Calu3 (cell line): ENCODE measurements at regions of chr22 and their contacts with region 1.

Region 1: DNA sequence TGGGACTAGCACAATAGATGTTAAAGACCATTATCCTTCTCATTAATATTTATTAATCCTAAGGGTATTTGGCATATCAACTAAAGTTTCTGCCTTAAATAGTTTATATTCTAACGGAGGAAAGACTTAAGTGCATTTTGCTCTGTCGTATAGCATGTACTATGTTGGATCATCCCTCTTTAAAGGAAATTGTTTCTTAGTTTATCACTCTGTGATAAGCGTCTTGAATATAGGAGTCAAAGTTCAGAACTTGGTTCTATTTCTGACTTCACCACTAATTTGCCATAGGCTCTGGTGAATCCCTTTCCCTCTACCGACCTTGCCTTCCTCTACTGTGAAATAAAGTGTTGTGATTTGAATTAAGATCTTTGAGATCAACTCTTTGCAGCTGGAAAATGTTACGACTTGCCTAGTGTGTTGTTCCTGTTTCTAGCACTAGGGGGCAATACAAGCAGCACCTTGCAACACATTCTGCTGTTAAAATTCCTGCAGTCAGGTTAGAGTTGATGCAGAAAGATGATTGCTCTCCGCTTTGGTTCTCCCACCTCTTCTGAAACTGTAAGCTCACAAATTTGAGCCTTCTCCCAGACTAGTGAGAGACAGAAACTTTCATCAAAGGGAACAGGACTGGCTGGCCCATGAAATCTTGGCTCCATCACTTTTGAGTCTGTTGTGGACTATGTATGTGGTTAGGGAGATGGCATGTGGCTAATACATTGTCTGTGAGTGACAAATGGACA is 27.8 kb upstream of the ZNRF3 start:
- DNase-seq: peak; percentile 71
- H3K4me3 Mint-ChIP-seq: no peak overlapping the region
- H3K27ac Mint-ChIP-seq: no peak overlapping the region
- H3K4me1 Mint-ChIP-seq: peaks cover 10% of the 10 kb centered on the region
- H3K27me3 Mint-ChIP-seq: no peaks in the 10 kb centered on the region
- CTCF ChIP-seq: peak; percentile 84

Region 2: GRCh38 chr22:28728621-28729313 is 126.8 kb before region 1 on chr22:
- CTCF ChIA-PET with region 1: no interaction called
- intact Hi-C with region 1: no loop called
- DNase-seq: no peak
- H3K4me3 Mint-ChIP-seq: no peak overlapping the region
- H3K27ac Mint-ChIP-seq: no peak overlapping the region
- H3K4me1 Mint-ChIP-seq: no peaks in the 10 kb centered on the region
- H3K27me3 Mint-ChIP-seq: no peaks in the 10 kb centered on the region
- CTCF ChIP-seq: no peak

Region 3: GRCh38 chr22:28894334-28894733 is 38.8 kb after region 1 on chr22:
- CTCF ChIA-PET with region 1: no interaction called
- intact Hi-C with region 1: no loop called
- DNase-seq: no peak
- H3K4me3 Mint-ChIP-seq: no peak overlapping the region
- H3K27ac Mint-ChIP-seq: no peak overlapping the region
- H3K4me1 Mint-ChIP-seq: peaks cover 41% of the 10 kb centered on the region
- H3K27me3 Mint-ChIP-seq: no peaks in the 10 kb centered on the region
- CTCF ChIP-seq: no peak

Region 4: DNA sequence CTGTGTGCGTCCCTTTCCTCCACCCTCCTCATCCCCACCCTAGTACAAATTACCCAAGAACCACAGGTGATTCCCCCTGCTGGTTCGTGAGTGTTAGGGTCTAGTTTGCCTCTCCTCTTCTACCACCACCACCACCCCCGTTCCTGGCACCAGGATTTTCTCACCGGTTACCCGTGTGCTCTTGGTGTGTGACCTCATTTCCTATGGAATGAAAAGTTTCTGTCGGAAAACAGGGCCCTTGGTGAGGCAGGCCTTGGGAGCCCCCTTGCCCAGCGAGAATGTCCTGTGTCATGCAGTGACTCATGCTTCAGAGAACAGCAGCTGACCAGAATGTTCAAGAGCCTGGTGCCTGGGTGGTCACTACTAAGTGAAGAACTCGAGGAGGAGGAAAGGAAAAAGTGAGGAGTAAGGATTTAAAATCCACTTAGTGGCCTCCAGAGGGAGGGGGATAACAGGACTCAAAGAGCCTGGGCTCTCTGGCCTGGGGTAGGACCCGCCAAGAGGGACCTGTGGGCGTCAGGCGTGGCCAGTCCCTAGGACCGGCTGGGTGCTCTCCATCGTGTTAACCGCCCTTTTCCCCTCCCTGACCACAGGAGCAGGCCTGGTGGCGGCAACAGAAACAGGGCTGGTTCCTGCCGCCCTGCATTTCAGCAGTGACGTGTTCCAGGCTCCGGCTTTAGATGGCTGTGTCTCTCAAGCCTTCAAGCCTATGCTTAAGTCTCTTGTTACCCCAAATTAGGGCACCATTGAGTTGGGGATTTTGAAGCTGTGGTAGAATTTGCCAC is 175.9 kb after region 1 on chr22:
- CTCF ChIA-PET with region 1: interaction called, 11 read pairs
- intact Hi-C with region 1: no loop called
- DNase-seq: peak; percentile 84
- H3K4me3 Mint-ChIP-seq: peak overlapping the region; percentile 92
- H3K27ac Mint-ChIP-seq: peak overlapping the region; percentile 99
- H3K4me1 Mint-ChIP-seq: peaks cover 60% of the 10 kb centered on the region
- H3K27me3 Mint-ChIP-seq: no peaks in the 10 kb centered on the region
- CTCF ChIP-seq: peak; percentile 18

Region 5: DNA sequence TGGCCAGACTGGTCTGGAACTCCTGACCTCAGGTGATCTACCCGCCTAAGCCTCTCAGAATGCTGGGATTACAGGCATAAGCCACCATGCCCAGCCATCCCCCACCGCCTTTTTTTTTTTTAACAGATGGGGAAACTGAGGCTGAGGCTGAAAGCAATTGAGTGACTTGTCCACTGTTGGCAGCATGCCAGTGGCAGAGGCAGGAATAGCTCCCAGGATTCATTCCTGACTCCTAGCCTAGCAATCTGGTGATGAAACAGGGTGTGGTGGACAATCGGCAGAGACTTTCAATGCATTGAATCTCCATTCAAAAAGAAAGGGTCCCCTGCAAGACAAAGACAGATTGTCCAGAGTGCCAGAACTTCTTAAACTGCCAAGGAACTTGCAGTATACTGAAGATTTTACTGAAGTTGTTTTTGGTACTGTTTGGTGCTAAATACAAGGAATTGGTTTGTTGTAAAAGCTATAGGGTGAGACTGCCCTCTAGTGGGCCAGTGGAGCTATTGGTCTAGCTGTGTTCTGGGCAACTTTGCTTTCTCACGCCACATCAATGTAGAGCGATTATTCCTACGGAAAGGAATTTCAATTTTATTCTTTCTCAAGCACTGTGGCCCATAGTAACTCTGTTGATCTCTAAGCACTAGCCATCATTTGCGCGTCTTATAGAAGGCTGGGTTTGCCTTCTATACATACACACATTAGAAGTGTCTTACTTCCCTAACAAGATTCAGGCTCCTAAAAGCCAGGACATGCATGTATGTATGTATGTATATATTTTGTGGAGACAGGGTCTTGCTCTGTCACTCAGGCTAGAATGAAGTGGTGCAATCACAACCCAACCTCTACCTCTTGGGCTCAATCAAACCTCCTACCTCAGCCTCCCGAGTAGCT is 185.1 kb after region 1 on chr22:
- CTCF ChIA-PET with region 1: interaction called, 42 read pairs
- intact Hi-C with region 1: loop called (anchors 1 kb)
- DNase-seq: peak; percentile 72
- H3K4me3 Mint-ChIP-seq: no peak overlapping the region
- H3K27ac Mint-ChIP-seq: no peak overlapping the region
- H3K4me1 Mint-ChIP-seq: peaks cover 43% of the 10 kb centered on the region
- H3K27me3 Mint-ChIP-seq: no peaks in the 10 kb centered on the region
- CTCF ChIP-seq: peak; percentile 82

Region 6: GRCh38 chr22:29154364-29155048 is 299.0 kb after region 1 on chr22:
- CTCF ChIA-PET with region 1: no interaction called
- intact Hi-C with region 1: loop called (anchors 2 kb)
- DNase-seq: peak; percentile 87
- H3K4me3 Mint-ChIP-seq: peak overlapping the region; percentile 46
- H3K27ac Mint-ChIP-seq: no peak overlapping the region
- H3K4me1 Mint-ChIP-seq: peaks cover 6% of the 10 kb centered on the region
- H3K27me3 Mint-ChIP-seq: peaks cover 28% of the 10 kb centered on the region
- CTCF ChIP-seq: peak; percentile 94